HAP-1 (cell line): ENCODE measurements at regions of chr16 and their contacts with region 1.

Region 1: DNA sequence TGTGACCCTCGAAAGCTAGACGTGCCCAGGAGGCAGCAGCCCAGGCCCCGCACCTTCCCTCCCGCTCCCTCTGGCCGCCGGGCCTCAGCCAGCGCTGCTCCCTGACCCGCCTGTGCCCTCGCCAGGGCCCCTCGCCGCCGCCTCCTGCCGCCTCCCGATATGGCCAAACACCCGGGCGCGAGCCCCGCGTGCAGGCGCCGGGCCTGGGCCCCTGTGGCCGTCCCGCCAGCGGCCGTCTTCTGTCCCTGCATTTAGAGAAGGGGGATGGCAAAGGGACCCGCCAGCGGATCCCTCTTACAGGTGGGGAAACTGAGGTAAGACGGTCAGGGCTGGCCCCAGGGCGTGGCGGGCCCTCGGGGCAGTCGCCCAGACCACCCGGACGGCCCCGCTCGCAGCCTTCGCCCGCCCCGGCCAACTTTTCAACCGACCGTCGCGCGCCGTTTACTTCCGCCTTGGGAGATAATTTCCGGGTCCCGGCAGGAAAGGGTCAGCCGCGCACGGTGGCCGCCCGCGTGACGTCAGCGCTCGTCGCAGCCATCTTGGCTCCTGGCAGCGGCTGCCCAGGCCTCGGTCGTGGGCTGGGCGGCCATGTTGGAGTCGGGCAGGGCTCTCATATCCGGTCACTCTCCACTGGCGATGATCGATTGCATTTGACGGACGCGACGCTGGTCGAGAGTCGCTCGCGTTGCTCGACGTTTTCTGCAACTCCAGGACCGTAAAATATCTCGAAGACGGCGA is 7.0 kb upstream of the GNG13 start:
- DNase-seq: peak; percentile 87 to 95
- H3K4me3 ChIP-seq: peak overlapping the region; percentile 78
- H3K4me1 ChIP-seq: peaks cover 3% of the 10 kb centered on the region
- H3K27me3 ChIP-seq: peaks cover 7% of the 10 kb centered on the region; the same call in 1 of the 2 replicates

Region 2: GRCh38 chr16:1048442-1049112 is 241.1 kb after region 1 on chr16:
- in situ Hi-C with region 1: loop called (anchors 5 kb)
- DNase-seq: peak; percentile 76 to 90
- H3K4me3 ChIP-seq: no peak overlapping the region
- H3K4me1 ChIP-seq: peaks cover 6% of the 10 kb centered on the region
- H3K27me3 ChIP-seq: no peaks in the 10 kb centered on the region